HAP-1 (cell line): ENCODE measurements at regions of chr1 and their contacts with region 1.

Region 1: GRCh38 chr1:16958503-16958902 is 21.9 kb downstream of the MFAP2 start:
- DNase-seq: no peak
- H3K4me3 ChIP-seq: no peak overlapping the region
- H3K4me1 ChIP-seq: no peaks in the 10 kb centered on the region
- H3K27me3 ChIP-seq: no peaks in the 10 kb centered on the region

Region 2: DNA sequence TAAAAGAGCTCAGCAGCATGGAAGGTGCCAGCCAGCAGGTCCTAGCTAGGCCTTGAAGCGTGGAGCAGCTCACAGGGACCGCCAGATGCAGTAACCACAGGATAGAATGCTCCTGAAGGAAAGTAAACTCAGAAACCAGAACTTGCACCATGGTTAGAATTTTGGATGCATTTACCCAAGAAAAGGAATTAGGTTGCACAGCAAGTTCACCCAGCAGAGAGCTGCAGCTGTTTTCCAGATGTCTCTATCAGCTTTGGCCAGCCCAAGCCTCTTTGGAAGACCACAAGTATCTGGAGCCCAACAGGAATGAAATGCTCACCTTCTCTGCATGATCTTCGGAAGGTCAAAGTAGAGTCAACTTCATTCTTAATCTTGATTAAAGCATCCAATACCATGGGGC is 74.2 kb after region 1 on chr1:
- in situ Hi-C with region 1: no loop called
- DNase-seq: no peak
- H3K4me3 ChIP-seq: no peak overlapping the region
- H3K4me1 ChIP-seq: peaks cover 13% of the 10 kb centered on the region
- H3K27me3 ChIP-seq: no peaks in the 10 kb centered on the region

Region 3: GRCh38 chr1:17053685-17054410 is 95.3 kb after region 1 on chr1 and contains the start of gene SDHB:
- in situ Hi-C with region 1: loop called (anchors 5 kb)
- DNase-seq: peak; percentile 95 to 99
- H3K4me3 ChIP-seq: peak within 1 kb of the TSS; percentile 72
- H3K4me1 ChIP-seq: peaks cover 14% of the 10 kb centered on the region
- H3K27me3 ChIP-seq: no peaks in the 10 kb centered on the region

Region 4: GRCh38 chr1:17236779-17237560 is 278.5 kb after region 1 on chr1:
- in situ Hi-C with region 1: loop called (anchors 10 kb)
- DNase-seq: peak; percentile 61 to 95
- H3K4me3 ChIP-seq: no peak overlapping the region
- H3K4me1 ChIP-seq: no peaks in the 10 kb centered on the region; the same call in 1 of the 2 replicates
- H3K27me3 ChIP-seq: peaks cover 10% of the 10 kb centered on the region

Region 5: GRCh38 chr1:17520071-17520813 is 561.7 kb after region 1 on chr1:
- in situ Hi-C with region 1: no loop called
- DNase-seq: no peak
- H3K4me3 ChIP-seq: no peak overlapping the region
- H3K4me1 ChIP-seq: no peaks in the 10 kb centered on the region
- H3K27me3 ChIP-seq: no peaks in the 10 kb centered on the region; the same call in 1 of the 2 replicates